ENCODE measurements at regions of chr2 and their contacts with region 1.

Region 1: GRCh38 chr2:143034292-143035074 is 94.7 kb upstream of the ARHGAP15 start:
- DNase-seq: peak; percentile 58 to 83 (median 77)
- H3K4me3 ChIP-seq: no peak overlapping the region
- H3K4me3 Mint-ChIP-seq: no peak overlapping the region
- H3K27ac ChIP-seq: no peak overlapping the region
- H3K27ac Mint-ChIP-seq: no peak overlapping the region
- H3K4me1 ChIP-seq: no peaks in the 10 kb centered on the region
- H3K4me1 Mint-ChIP-seq: peaks cover 0 to 4% (median under 1%) of the 10 kb centered on the region in 4 donors
- H3K27me3 ChIP-seq: no peaks in the 10 kb centered on the region
- H3K27me3 Mint-ChIP-seq: peaks cover 0 to 4% of the 10 kb centered on the region in 2 donors

Region 2: GRCh38 chr2:142758968-142759367 is 275.5 kb before region 1 on chr2:
- CTCF ChIA-PET with region 1: no interaction called
- POLR2A ChIA-PET with region 1: no interaction called
- intact Hi-C with region 1: no loop called
- DNase-seq: no peak
- H3K4me3 ChIP-seq: no peak overlapping the region
- H3K4me3 Mint-ChIP-seq: peak overlapping the region in 1 of 8 donors; percentile 7
- H3K27ac ChIP-seq: no peak overlapping the region
- H3K27ac Mint-ChIP-seq: no peak overlapping the region
- H3K4me1 ChIP-seq: no peaks in the 10 kb centered on the region
- H3K4me1 Mint-ChIP-seq: no peaks in the 10 kb centered on the region
- H3K27me3 ChIP-seq: no peaks in the 10 kb centered on the region
- H3K27me3 Mint-ChIP-seq: no peaks in the 10 kb centered on the region

Region 3: DNA sequence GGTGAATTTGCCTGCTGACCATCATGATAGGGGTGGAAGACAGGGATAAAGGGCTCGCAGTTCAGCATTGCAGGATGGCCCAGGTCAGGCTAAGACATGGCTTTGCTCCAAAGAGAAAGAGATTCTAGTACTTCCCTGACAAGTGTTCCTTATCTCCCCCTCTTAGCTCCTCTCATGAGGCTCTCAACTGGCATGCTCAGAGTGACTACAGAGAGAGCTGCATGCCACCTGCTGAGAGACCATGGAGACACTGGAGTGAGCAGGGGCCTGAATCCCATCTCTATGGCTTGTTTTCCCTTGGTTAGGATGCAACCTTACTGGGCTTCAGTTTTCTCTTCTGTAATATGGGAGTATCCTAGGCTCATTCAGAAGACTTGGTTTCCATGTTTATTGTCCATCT is 189.1 kb after region 1 on chr2:
- CTCF ChIA-PET with region 1: interaction called, 10 read pairs
- POLR2A ChIA-PET with region 1: interaction called, 3 read pairs
- intact Hi-C with region 1: loop called (anchors 1 kb)
- DNase-seq: no peak
- H3K4me3 ChIP-seq: no peak overlapping the region
- H3K4me3 Mint-ChIP-seq: peak overlapping the region in 2 of 8 donors; percentile 20 to 34
- H3K27ac ChIP-seq: no peak overlapping the region
- H3K27ac Mint-ChIP-seq: peak overlapping the region in 4 of 7 donors; percentile 63 to 75 (median 70)
- H3K4me1 ChIP-seq: peaks cover 70% of the 10 kb centered on the region
- H3K4me1 Mint-ChIP-seq: peaks cover 44 to 69% (median 58%) of the 10 kb centered on the region in 4 donors
- H3K27me3 ChIP-seq: no peaks in the 10 kb centered on the region
- H3K27me3 Mint-ChIP-seq: no peaks in the 10 kb centered on the region

Region 4: GRCh38 chr2:143284087-143284675 is 249.7 kb after region 1 on chr2:
- CTCF ChIA-PET with region 1: interaction called, 4 read pairs
- POLR2A ChIA-PET with region 1: no interaction called
- intact Hi-C with region 1: loop called (anchors 2 kb)
- DNase-seq: peak; percentile 31 to 46 (median 35)
- H3K4me3 ChIP-seq: no peak overlapping the region
- H3K4me3 Mint-ChIP-seq: peak overlapping the region in 1 of 8 donors; percentile 32
- H3K27ac ChIP-seq: no peak overlapping the region
- H3K27ac Mint-ChIP-seq: peak overlapping the region; percentile 18 to 83 (median 53)
- H3K4me1 ChIP-seq: peaks cover 26% of the 10 kb centered on the region
- H3K4me1 Mint-ChIP-seq: peaks cover 42 to 82% (median 57%) of the 10 kb centered on the region in 4 donors
- H3K27me3 ChIP-seq: no peaks in the 10 kb centered on the region
- H3K27me3 Mint-ChIP-seq: no peaks in the 10 kb centered on the region

Measured in CD4-positive, alpha-beta memory T cell (primary cell).